ENCODE measurements at regions of chr11 and their contacts with region 1.

Region 1: DNA sequence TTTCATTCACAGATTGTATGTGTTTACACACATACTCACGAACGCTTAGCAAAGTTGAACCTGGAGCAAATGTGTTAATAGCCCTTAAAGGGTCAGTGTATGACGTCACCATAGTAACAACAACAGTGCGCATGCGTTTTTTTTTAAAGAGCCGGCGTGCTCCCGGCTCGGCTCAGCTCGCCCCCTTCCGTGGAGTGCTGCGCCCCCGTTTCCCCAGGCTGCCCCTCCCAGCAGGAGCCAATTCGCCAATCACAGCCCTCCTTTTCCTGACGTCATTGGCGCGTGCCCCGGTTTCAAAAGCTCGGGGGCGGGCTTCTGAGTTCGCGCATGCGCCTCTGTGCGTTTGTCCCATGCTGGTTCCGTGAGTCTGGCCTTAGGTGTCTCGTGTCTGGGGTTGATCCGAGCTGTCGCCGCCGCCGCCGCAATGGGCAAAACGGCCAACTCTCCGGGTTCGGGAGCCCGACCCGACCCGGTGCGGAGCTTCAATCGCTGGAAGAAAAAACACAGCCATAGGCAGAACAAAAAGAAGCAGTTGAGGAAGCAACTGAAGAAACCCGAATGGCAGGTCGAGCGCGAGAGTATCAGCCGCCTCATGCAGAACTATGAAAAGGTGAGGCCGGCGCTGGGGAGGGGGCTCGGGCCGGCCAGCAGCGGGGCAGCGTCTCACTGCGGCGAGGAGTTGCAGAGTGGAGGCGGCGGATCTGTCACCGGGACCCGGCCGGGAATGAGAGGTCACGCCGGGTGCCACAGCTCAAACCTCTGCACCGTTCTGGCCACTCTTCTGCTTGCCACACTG is at the start of gene DDX10:
- DNase-seq: peak; percentile 98
- ATAC-seq: peak; percentile 99 to 100 (median 100)
- H3K4me3 ChIP-seq: peak within 1 kb of the TSS; percentile 69 to 98 (median 84)
- H3K27ac ChIP-seq: peak within 1 kb of the TSS in 9 of 10 donors; percentile 29 to 85 (median 68)
- H3K4me1 ChIP-seq: peaks cover 7 to 42% (median 30%) of the 10 kb centered on the region in 9 donors
- H3K27me3 ChIP-seq: no peaks in the 10 kb centered on the region
- CTCF ChIP-seq: peak in 5 of 9 donors; percentile 12 to 47 (median 18)
- total RNA-seq, gene DDX10: 9.3 to 15.3 (median 11.5) TPM

Region 2: GRCh38 chr11:108008656-108009496 is 656.1 kb before region 1 on chr11 and contains the start of gene CUL5:
- intact Hi-C with region 1: loop called in 1 of 10 experiments (anchors 10 kb)
- DNase-seq: peak; percentile 92 to 94
- ATAC-seq: peak; percentile 96 to 98 (median 98)
- H3K4me3 ChIP-seq: peak within 1 kb of the TSS; percentile 73 to 100 (median 88)
- H3K27ac ChIP-seq: peak within 1 kb of the TSS; percentile 91 to 99 (median 97)
- H3K4me1 ChIP-seq: peaks cover 2 to 47% (median 41%) of the 10 kb centered on the region in 9 donors
- H3K27me3 ChIP-seq: no peaks in the 10 kb centered on the region
- CTCF ChIP-seq: peak; percentile 83 to 94 (median 91)
- total RNA-seq, gene CUL5: 34.8 to 51.3 (median 42.6) TPM

Region 3: GRCh38 chr11:108121274-108122155 is 543.4 kb before region 1 on chr11 and contains the start of gene ACAT1:
- intact Hi-C with region 1: loop called in 1 of 10 experiments (anchors 5 kb)
- DNase-seq: peak; percentile 98 to 99
- ATAC-seq: peak; percentile 95 to 97 (median 96)
- H3K4me3 ChIP-seq: peak within 1 kb of the TSS; percentile 59 to 90 (median 74)
- H3K27ac ChIP-seq: peak within 1 kb of the TSS; percentile 92 to 99 (median 96)
- H3K4me1 ChIP-seq: peaks cover 9 to 54% (median 38%) of the 10 kb centered on the region in 9 donors
- H3K27me3 ChIP-seq: no peaks in the 10 kb centered on the region
- CTCF ChIP-seq: peak in 8 of 9 donors; percentile 5 to 51 (median 38)
- total RNA-seq, gene ACAT1: 219 to 535 (median 412) TPM

Region 4: GRCh38 chr11:108467091-108467823 is 197.7 kb before region 1 on chr11 and contains the start of gene C11orf65:
- intact Hi-C with region 1: loop called in 1 of 10 experiments (anchors 10 kb)
- DNase-seq: peak; percentile 94 to 97
- ATAC-seq: peak; percentile 99 to 100 (median 100)
- H3K4me3 ChIP-seq: peak within 1 kb of the TSS; percentile 51 to 74 (median 66)
- H3K27ac ChIP-seq: peak within 1 kb of the TSS; percentile 94 to 99 (median 98)
- H3K4me1 ChIP-seq: peaks cover 0 to 22% (median 8%) of the 10 kb centered on the region in 9 donors
- H3K27me3 ChIP-seq: no peaks in the 10 kb centered on the region
- CTCF ChIP-seq: no peak
- total RNA-seq, gene C11orf65: 0.39 to 1.6 (median 1.1) TPM in 9 of 10 donors, not detected in the other

Region 5: DNA sequence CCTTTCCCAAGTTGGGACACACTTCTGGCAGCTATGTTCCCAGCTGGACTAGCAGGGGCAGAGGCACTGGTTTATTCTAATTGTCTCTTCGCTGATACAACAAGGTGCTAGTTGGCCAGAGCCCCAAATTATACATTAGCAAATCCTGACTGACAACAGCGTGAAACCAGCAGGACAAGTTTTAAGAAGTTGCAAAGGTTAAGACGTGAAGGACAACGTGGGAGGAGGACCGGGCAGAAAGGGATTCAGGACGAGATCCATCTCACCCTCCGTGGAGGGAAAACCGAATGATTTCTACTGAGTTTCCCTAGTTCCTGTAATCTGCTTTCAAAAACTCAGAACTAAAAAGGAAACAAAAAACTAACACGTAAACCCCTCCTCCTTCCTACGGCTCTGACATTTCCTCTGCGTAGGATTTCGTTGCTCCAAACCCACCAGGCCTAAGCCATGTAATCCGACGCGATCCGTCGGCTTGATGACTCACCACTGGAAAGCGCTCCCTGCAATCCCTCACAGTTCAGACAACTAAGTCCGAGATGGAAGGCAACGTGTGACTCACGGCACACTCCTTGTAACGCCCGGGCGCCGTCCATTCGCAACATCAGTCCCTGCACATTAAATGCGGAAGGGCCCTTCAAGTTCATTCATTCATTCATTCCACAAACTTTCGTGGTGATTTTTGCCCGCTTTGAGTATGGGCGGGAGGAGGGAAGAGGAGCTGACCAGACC is 167.4 kb before region 1 on chr11:
- intact Hi-C with region 1: loop called in 1 of 10 experiments (anchors 10 kb)
- DNase-seq: peak; percentile 77 to 89
- ATAC-seq: peak; percentile 93 to 98 (median 96)
- H3K4me3 ChIP-seq: peak overlapping the region; percentile 62 to 83 (median 76)
- H3K27ac ChIP-seq: peak overlapping the region; percentile 83 to 100 (median 95)
- H3K4me1 ChIP-seq: peaks cover 3 to 22% (median 18%) of the 10 kb centered on the region in 9 donors
- H3K27me3 ChIP-seq: no peaks in the 10 kb centered on the region
- CTCF ChIP-seq: no peak

Measured in heart right ventricle (tissue), 16 donors.